ENCODE measurements at regions of chr2 and their contacts with region 1.

Region 1: GRCh38 chr2:46776687-46777327 is 138.8 kb downstream of the MCFD2 start:
- DNase-seq: peak; percentile 68
- CTCF ChIP-seq: peak; percentile 77

Region 2: DNA sequence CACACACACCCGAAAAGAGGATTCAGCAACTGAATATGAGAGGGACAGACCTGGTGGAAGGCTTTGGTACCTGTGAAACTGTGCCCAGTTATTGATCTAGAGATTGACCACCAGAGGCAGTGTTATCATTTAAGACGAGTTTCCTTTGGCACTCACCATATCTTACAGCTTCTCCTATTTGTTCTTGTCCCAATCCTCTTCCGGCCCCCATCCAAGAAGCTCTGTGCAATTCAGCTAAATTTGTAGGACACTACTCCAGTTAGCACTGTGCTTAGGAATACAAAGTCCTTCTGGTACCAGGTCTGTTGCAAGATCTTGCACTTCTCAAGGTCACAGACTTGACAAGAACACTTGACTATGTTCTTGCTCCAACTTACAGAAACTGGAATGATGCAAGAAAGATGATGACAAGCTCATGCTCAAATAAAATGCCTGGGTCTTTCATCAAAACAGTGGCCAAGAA is 119.7 kb before region 1 on chr2:
- CTCF ChIA-PET with region 1: interaction called, 19 read pairs
- POLR2A ChIA-PET with region 1: no interaction called
- DNase-seq: peak; percentile 53
- CTCF ChIP-seq: peak; percentile 47

Region 3: DNA sequence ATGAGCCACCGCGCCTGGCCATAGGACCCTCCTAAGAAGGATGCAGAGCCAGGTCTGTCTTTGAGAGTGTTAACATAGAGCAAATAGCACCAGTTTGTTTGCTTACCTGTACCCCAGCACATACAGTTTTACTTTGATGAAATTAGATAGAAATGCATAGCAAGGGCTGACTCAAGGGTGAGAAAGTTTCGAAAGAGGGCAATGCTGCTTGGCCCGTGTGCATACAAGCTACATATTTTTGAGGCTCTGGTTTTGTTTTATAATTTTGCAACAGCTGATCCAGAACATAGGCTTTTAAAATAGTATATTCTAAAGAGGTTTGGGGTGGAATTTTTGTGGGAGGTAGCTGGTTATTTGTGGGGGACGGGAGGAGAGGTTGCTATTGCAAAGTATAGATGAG is 12.9 kb before region 1 on chr2:
- CTCF ChIA-PET with region 1: interaction called, 10 read pairs
- POLR2A ChIA-PET with region 1: no interaction called
- DNase-seq: no peak
- CTCF ChIP-seq: no peak

Region 4: DNA sequence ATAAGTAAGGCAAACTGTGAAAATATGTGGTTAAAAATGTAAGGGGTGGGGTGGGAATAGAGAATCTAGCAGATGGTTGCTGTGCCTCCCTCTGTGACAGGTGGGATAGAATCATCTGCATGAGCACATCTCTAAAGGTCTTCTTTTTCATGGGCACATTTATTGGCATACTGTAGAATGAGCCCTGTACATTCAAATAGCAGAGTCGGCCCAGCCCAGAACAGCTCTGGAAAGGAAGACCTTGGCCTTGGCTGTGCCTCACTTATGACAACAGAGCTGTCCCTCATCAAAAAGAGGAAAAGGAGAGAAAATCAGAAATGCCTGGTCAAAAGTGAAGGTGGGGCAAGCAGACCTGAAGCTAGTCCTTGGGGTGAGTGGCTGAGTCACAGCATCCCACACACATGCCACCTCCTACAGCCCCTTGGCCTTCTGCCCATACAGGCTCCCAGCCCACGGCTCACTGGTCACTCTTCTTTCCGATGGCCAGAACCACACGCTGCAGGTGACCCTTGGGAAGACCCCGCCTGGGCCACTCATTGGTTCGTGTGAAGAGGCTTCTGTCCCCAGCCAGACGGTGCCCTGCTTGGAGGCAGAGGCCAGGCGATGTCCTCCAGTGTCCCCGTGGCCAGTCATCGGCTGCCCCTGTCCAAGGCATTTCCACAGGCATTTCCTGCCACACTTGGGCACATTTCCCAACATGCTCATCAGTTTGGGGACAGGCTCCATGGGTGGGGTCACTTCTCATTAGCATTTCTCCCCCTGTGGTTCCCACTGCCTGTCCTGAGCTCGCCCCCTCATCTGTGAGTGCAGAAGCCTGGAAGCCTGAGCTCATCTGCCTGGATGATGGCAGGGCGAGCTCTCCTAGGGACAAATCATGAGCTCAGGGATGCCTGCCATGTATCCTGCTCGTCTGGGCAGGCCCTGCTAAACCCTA is 25.2 kb after region 1 on chr2:
- CTCF ChIA-PET with region 1: interaction called, 18 read pairs
- POLR2A ChIA-PET with region 1: interaction called, 3 read pairs
- DNase-seq: peak; percentile 10
- CTCF ChIP-seq: no peak

Region 5: GRCh38 chr2:46925545-46926351 is 148.9 kb after region 1 on chr2:
- CTCF ChIA-PET with region 1: no interaction called
- POLR2A ChIA-PET with region 1: no interaction called
- DNase-seq: no peak
- CTCF ChIP-seq: no peak

Measured in GM10248 (cell line).